ENCODE measurements at regions of chr7 and their contacts with region 1.

Region 1: GRCh38 chr7:129825496-129826267 is 127.1 kb downstream of the UBE2H start:
- DNase-seq: peak; percentile 91
- ATAC-seq: peak; percentile 26
- H3K4me3 Mint-ChIP-seq: peak overlapping the region; percentile 85
- H3K27ac Mint-ChIP-seq: no peak overlapping the region
- H3K4me1 Mint-ChIP-seq: peaks cover 35% of the 10 kb centered on the region
- H3K27me3 Mint-ChIP-seq: no peaks in the 10 kb centered on the region; the same call in 1 of the 2 replicates
- CTCF ChIP-seq: peak; percentile 99

Region 2: DNA sequence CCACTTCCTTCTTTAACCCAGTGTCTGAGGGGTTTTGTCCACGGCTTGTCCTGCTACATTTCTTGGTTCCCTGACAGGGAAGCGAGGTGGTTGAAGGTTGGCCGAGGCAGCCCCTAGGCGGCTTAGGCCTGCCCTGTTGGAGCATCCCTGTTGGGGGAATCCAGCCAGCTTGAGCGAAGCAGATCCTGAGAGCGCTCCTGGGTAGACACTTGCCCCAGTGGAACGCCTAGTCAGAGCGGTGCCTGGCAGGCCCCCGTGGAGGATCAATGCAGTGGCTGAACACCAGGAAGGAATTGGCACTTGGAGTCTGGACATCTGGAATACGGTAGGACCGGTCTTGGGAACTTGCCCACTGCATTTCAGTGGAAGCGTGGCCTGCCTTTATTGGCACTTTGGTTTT is 246.9 kb before region 1 on chr7:
- CTCF ChIA-PET with region 1: interaction called, 13 read pairs
- POLR2A ChIA-PET with region 1: no interaction called
- DNase-seq: no peak
- ATAC-seq: no peak
- H3K4me3 Mint-ChIP-seq: no peak overlapping the region
- H3K27ac Mint-ChIP-seq: no peak overlapping the region
- H3K4me1 Mint-ChIP-seq: no peaks in the 10 kb centered on the region
- H3K27me3 Mint-ChIP-seq: no peaks in the 10 kb centered on the region
- CTCF ChIP-seq: no peak

Region 3: DNA sequence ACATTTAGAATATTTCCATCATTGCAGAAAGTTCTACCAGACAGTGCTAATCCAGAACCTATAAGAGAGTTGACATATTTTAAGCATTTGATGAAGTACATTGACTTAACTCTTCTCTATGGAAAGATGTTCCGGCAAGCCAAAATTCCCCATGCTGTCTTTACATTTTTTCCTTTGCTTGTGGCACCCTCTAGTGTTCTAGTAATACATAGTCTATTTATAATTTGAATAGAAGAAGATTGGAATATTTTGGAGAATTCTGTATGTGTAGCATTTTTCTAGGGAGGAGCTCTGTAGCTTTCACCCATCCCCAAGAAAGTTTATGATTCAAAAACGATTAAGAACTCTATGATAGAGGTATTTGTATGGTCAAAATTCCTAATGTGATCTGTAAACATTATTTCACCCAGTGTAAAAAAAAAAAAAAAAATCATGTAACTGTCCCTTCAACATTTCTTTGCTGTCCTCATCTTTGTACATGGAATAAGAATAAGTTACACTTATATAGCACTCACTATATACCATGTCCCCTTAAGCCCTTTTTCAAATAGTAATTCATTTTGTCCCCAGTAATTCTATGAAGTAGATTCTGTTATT is 180.9 kb before region 1 on chr7:
- CTCF ChIA-PET with region 1: interaction called, 13 read pairs
- POLR2A ChIA-PET with region 1: no interaction called
- DNase-seq: no peak
- ATAC-seq: no peak
- H3K4me3 Mint-ChIP-seq: no peak overlapping the region
- H3K27ac Mint-ChIP-seq: no peak overlapping the region
- H3K4me1 Mint-ChIP-seq: peaks cover 44% of the 10 kb centered on the region
- H3K27me3 Mint-ChIP-seq: no peaks in the 10 kb centered on the region
- CTCF ChIP-seq: peak; percentile 24; the same call in 1 of the 2 replicates

Region 4: DNA sequence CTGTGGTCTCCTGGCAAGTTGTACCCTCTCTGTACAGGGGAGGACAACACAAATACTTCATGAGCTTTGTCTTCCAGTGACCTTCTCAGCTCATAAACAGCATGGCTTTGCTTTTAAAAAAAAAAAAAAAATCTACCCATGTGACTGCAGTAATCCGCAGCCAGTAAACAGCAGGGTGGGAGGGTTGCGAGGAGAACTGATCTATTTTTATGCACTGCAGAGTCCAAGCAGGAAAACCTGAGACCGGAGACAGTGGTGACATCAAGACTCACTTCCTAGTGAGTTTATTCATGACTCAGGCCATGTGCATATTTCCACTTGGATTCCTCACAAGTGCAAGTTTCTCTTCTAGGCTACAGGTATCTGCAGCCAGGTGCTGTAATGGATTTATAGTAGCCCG is 86.3 kb before region 1 on chr7:
- CTCF ChIA-PET with region 1: interaction called, 26 read pairs
- POLR2A ChIA-PET with region 1: interaction called, 7 read pairs
- DNase-seq: no peak
- ATAC-seq: no peak
- H3K4me3 Mint-ChIP-seq: no peak overlapping the region
- H3K27ac Mint-ChIP-seq: peak overlapping the region; percentile 63; the same call in 1 of the 2 replicates
- H3K4me1 Mint-ChIP-seq: peaks cover 48% of the 10 kb centered on the region
- H3K27me3 Mint-ChIP-seq: no peaks in the 10 kb centered on the region
- CTCF ChIP-seq: no peak

Region 5: GRCh38 chr7:129780257-129780973 is 45.3 kb before region 1 on chr7:
- CTCF ChIA-PET with region 1: interaction called, 61 read pairs
- POLR2A ChIA-PET with region 1: interaction called, 24 read pairs
- DNase-seq: peak; percentile 97
- ATAC-seq: peak; percentile 55
- H3K4me3 Mint-ChIP-seq: peak overlapping the region; percentile 82
- H3K27ac Mint-ChIP-seq: no peak overlapping the region
- H3K4me1 Mint-ChIP-seq: peaks cover 51% of the 10 kb centered on the region
- H3K27me3 Mint-ChIP-seq: peaks cover 75% of the 10 kb centered on the region
- CTCF ChIP-seq: no peak

Region 6: GRCh38 chr7:129845178-129845971 is 19.7 kb after region 1 on chr7:
- CTCF ChIA-PET with region 1: interaction called, 17 read pairs
- POLR2A ChIA-PET with region 1: interaction called, 3 read pairs
- DNase-seq: no peak
- ATAC-seq: no peak
- H3K4me3 Mint-ChIP-seq: no peak overlapping the region
- H3K27ac Mint-ChIP-seq: peak overlapping the region; percentile 78
- H3K4me1 Mint-ChIP-seq: peaks cover 76% of the 10 kb centered on the region
- H3K27me3 Mint-ChIP-seq: no peaks in the 10 kb centered on the region
- CTCF ChIP-seq: no peak